ENCODE measurements at regions of chr1 and their contacts with region 1.

Region 1: DNA sequence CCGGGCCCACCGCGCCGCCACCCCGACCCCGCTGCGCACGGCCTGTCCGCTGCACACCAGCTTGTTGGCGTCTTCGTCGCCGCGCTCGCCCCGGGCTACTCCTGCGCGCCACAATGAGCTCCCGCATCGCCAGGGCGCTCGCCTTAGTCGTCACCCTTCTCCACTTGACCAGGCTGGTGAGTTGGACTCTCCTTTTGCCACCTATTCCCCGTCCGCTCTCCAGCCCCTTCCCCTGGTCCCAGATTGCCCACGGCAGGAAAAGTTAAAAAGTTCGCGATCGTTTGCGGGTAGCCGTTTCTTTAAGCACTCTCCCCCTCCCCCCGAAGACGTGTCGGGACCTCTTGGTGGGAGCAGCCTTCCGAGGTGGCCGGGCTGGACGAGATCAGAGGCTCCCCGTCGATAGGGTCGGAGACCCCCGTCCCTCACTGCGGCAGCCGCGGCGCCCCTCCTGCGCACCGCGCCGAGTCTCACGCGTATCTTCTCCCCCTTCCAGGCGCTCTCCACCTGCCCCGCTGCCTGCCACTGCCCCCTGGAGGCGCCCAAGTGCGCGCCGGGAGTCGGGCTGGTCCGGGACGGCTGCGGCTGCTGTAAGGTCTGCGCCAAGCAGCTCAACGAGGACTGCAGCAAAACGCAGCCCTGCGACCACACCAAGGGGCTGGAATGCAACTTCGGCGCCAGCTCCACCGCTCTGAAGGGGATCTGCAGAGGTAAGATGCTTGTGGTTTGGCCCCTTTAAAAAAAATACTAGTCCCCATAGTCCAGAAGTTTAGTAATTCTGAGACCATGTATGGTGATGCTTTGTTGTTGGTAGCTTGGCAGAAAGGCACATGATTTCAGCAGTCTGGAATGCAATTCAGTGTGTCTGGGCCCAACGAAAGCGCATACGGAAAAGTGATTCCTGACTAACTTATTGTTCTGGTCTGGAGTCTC is 576 bp downstream of the CCN1 start:
- DNase-seq: peak; percentile 54 to 90
- H3K4me3 ChIP-seq: peak overlapping the region; percentile 85 to 91
- H3K27ac ChIP-seq: peak overlapping the region; percentile 99
- H3K4me1 ChIP-seq: peaks cover 0 to 46% (median 16%) of the 10 kb centered on the region in 4 donors
- H3K27me3 ChIP-seq: no peaks in the 10 kb centered on the region
- CTCF ChIP-seq: peak; percentile 76 to 77

Region 2: GRCh38 chr1:85313888-85314696 is 267.0 kb before region 1 on chr1:
- intact Hi-C with region 1: loop called (anchors 1 kb)
- DNase-seq: peak; percentile 38 to 75
- H3K4me3 ChIP-seq: no peak overlapping the region
- H3K27ac ChIP-seq: peak overlapping the region; percentile 74 to 77
- H3K4me1 ChIP-seq: peaks cover 0 to 37% (median 26%) of the 10 kb centered on the region in 4 donors
- H3K27me3 ChIP-seq: no peaks in the 10 kb centered on the region
- CTCF ChIP-seq: no peak

Region 3: DNA sequence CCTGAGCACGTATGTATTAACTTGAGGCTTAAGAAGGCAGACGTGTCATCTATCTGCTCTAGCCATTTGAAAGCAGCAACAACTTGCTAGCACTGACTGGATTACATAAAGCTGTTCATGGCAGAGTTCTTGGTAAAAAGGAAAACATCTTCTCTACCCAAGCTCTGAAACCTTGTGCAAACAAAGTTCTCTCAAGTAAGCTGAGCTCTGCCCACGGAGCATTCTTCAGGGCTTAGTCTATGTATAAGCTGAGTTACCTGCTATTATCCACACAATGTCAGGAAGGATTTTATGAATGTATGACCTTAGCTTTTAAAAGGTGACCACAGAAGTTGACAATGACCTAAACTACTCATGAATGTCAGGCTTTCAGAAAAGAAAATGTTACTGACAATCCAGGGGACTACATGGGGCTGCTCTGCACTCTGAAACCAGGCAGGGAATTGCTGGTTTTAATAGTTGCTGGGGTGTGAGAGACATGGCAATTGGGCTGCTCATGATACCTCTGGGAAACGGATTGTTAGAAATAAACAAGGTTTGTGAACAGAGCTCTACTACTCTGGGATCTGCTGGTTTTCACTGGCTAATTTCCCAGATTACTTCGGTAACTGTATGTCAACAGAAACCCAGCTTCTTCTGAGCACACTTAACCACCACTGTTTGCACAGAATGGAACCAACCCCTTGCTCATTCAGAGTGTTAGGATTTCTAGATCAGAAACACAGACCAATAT is 30.2 kb before region 1 on chr1:
- intact Hi-C with region 1: no loop called
- DNase-seq: no peak
- H3K4me3 ChIP-seq: no peak overlapping the region
- H3K27ac ChIP-seq: peak overlapping the region; percentile 69 to 73
- H3K4me1 ChIP-seq: peaks cover 0 to 79% (median 21%) of the 10 kb centered on the region in 4 donors
- H3K27me3 ChIP-seq: no peaks in the 10 kb centered on the region
- CTCF ChIP-seq: no peak

Region 4: DNA sequence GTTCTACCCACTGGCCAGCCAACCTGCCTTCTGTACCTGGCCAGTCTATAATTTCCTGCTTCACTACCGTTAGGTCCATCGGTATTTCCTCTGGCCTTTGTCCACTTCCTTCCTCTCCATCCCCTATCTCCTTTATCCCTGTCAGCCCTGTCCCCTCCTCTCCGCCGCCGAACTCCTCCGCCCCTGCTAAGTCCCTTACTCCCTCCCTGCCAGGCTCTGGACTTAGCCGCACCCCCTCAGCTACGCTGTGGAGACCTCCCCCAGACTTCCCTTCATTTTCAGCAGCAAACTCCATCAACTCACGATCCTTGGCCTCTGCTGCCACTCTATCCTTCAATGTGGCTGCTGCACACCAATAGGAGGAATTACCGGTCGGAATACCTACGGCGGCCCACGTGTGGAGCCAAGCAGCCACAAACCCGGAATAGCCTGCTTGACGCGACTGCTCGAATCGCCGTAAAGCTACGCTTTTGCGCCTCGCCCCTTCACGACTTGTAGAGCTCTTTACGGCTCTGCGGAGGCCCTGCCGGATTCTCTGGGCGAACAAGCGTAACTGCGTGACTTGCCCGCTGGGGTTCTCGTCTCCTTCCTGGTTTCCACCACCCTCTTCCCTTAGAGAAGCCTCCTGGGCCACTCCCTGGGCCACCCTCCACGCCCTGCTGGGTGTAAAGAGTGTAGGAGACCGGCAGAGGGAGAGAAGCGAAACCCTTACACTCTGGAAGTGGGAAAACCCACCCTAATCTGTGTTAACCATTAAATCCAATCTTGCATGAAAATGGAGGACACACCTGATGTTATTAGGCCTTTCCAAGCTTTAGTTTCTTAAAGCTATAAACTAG is 127.1 kb after region 1 on chr1 and contains the start of gene ZNHIT6:
- intact Hi-C with region 1: loop called (anchors 10 kb)
- DNase-seq: peak; percentile 84 to 94
- H3K4me3 ChIP-seq: peak within 1 kb of the TSS; percentile 64 to 65
- H3K27ac ChIP-seq: peak within 1 kb of the TSS; percentile 85 to 88
- H3K4me1 ChIP-seq: peaks cover 0 to 25% (median 8%) of the 10 kb centered on the region in 4 donors
- H3K27me3 ChIP-seq: no peaks in the 10 kb centered on the region
- CTCF ChIP-seq: peak; percentile 19 to 33

Measured in tibial artery (tissue), 4 donors.